PC-3 (cell line): ENCODE measurements at regions of chr14 and their contacts with region 1.

Region 1: GRCh38 chr14:102516531-102517415 is 7.2 kb upstream of the ANKRD9 start:
- DNase-seq: peak; percentile 50
- ATAC-seq: peak; percentile 75
- H3K4me3 ChIP-seq: peak overlapping the region; percentile 76
- H3K27ac ChIP-seq: no peak overlapping the region
- H3K4me1 ChIP-seq: 0 out of 2 replicates have a peak, but pooled peaks cover 3% of the 10 kb centered on the region
- H3K27me3 ChIP-seq: no peaks in the 10 kb centered on the region
- CTCF ChIP-seq: peak; percentile 71

Region 2: DNA sequence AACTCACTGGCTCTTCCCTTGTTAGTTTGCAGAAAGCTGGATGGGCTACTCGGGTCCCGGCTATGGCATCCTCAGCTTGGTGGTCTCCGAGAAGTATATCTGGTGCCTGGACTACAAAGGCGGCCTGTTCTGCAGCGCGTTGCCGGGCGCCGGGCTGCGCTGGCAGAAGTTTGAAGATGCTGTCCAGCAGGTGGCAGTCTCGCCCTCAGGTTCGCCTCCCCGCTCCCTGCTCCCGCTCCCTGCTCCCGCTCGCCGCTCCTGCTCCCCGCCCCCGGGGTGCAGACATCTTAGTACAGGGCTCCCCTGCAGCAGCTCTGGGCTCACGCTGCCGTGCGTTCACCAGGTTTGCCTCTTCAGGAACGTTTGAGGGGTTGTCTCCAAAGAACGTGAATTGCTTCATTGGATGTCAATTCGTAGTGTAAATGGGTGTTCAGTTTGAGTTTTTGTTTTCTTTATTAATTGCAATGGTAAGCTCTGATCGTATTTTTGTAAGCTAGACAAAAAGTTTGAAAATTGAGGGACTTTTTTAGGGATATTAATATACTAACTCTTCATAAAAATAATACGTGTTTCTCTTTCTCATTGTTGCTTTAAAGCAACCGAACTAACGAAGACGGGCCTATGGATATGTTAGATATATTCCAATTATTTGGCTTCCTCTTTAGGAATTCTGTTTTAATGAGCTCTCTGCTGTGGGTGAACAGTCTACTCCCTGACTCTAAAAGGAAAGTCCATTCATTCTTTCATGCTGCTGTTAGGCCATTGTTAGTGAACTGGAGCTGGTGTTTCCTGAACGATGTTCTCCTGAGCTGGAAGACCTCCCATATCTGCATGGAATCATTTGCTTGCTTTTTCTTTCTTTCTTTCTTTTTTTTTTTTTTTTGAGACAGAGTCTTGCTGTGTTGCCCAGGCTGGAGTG is 78.5 kb before region 1 on chr14:
- CTCF ChIA-PET with region 1: interaction called, 4 read pairs
- POLR2A ChIA-PET with region 1: interaction called, 3 read pairs
- intact Hi-C with region 1: loop called (anchors 1 kb)
- DNase-seq: peak; percentile 82
- ATAC-seq: peak; percentile 71
- H3K4me3 ChIP-seq: peak overlapping the region; percentile 51
- H3K27ac ChIP-seq: no peak overlapping the region
- H3K4me1 ChIP-seq: peaks cover 24% of the 10 kb centered on the region
- H3K27me3 ChIP-seq: no peaks in the 10 kb centered on the region
- CTCF ChIP-seq: peak; percentile 90

Region 3: DNA sequence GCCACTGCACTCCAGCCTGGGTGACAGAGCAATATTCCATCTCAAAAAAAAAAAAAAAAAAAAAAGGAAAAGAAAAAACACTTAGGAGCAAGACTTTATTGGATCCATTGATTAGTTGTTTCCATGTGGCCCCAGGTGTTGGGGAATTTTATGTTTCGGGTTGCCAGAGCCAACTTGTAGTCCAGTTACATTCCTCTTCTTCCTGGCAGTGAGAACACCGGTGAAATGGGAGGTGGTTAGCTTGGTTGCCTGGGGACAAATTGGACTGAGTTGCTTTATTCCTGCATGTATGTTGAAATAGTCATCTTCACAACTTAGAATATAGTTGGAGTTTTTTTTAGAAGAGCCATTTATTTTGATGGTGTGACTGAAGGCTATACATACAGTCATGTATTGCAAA is 88.3 kb after region 1 on chr14:
- CTCF ChIA-PET with region 1: no interaction called
- POLR2A ChIA-PET with region 1: interaction called, 10 read pairs
- intact Hi-C with region 1: no loop called
- DNase-seq: peak; percentile 31
- ATAC-seq: peak; percentile 51
- H3K4me3 ChIP-seq: no peak overlapping the region
- H3K27ac ChIP-seq: no peak overlapping the region
- H3K4me1 ChIP-seq: peaks cover 3% of the 10 kb centered on the region; the same call in 1 of the 2 replicates
- H3K27me3 ChIP-seq: no peaks in the 10 kb centered on the region
- CTCF ChIP-seq: no peak